Breast epithelium (tissue), 4 donors: ENCODE measurements at regions of chr3 and their contacts with region 1.

Region 1: DNA sequence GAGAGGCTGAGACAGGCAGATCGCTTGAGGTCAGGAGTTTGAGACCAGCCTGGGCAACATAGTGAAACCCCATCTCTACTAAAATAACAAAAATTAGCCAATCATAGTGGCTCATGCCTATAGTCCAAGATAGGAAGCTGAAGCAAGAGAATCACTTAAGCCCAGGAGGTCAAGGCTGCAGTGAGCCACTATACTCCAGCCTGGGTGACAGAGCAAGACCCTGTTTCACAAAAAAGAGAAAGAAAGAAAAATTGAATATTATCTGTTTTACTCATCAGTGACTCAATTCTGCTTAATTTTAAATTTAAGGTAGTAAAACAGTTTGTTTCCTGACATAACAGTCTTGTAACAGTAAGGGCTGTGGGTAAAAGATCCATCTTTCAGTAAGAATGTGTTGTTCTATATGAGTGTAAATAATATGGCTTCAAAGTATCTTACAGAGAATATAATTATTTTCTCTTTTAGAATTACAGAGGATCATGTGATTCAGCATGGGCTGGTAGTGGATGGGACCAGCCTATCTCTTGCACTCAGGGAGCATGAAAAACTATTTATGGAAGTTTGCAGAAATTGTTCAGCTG is 85.8 kb downstream of the ATP11B start:
- DNase-seq: no peak
- H3K4me3 ChIP-seq: no peak overlapping the region
- H3K27ac ChIP-seq: no peak overlapping the region
- H3K4me1 ChIP-seq: no peaks in the 10 kb centered on the region
- H3K27me3 ChIP-seq: no peaks in the 10 kb centered on the region
- CTCF ChIP-seq: no peak
- POLR2A ChIP-seq: no peak

Region 2: DNA sequence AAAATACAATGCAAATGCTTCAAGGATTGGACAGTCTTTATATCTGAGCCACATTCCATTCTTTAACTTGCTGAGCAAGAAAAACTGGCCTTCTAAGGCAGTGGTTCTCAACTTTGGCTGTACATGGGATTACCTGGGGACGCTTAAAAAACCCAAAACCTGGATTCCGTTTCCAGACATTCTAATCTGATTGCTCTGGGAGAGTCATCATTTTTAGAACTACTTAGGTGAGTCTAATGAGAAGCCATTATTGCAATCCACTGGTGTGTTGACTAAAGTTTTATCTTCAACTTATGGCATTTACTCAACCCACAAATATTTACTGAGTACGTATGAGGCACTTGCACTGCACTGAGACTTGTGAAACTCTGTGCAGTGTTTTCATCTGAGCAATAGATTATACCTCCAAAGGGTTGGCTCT is 281.5 kb before region 1 on chr3:
- intact Hi-C with region 1: loop called (anchors 5 kb)
- DNase-seq: no peak
- H3K4me3 ChIP-seq: no peak overlapping the region
- H3K27ac ChIP-seq: no peak overlapping the region
- H3K4me1 ChIP-seq: no peaks in the 10 kb centered on the region
- H3K27me3 ChIP-seq: no peaks in the 10 kb centered on the region
- CTCF ChIP-seq: no peak
- POLR2A ChIP-seq: no peak